Vagina (tissue), 2 donors: ENCODE measurements at regions of chr6 and their contacts with region 1.

Region 1: GRCh38 chr6:133502441-133503259 is 261.5 kb downstream of the EYA4 start:
- DNase-seq: no peak
- H3K4me3 ChIP-seq: no peak overlapping the region
- H3K27ac ChIP-seq: peak overlapping the region; percentile 43
- H3K4me1 ChIP-seq: peaks cover 12% of the 10 kb centered on the region
- H3K27me3 ChIP-seq: no peaks in the 10 kb centered on the region
- CTCF ChIP-seq: no peak
- POLR2A ChIP-seq: no peak

Region 2: GRCh38 chr6:133542056-133542821 is 39.6 kb after region 1 on chr6:
- intact Hi-C with region 1: loop called (anchors 5 kb)
- DNase-seq: no peak
- H3K4me3 ChIP-seq: no peak overlapping the region
- H3K27ac ChIP-seq: no peak overlapping the region
- H3K4me1 ChIP-seq: no peaks in the 10 kb centered on the region
- H3K27me3 ChIP-seq: no peaks in the 10 kb centered on the region
- CTCF ChIP-seq: no peak
- POLR2A ChIP-seq: no peak

Region 3: GRCh38 chr6:133671376-133671775 is 168.7 kb after region 1 on chr6:
- intact Hi-C with region 1: no loop called
- DNase-seq: no peak
- H3K4me3 ChIP-seq: no peak overlapping the region
- H3K27ac ChIP-seq: no peak overlapping the region
- H3K4me1 ChIP-seq: no peaks in the 10 kb centered on the region
- H3K27me3 ChIP-seq: no peaks in the 10 kb centered on the region
- CTCF ChIP-seq: no peak
- POLR2A ChIP-seq: no peak